PC-9 (cell line): ENCODE measurements at regions of chr3 and their contacts with region 1.

Region 1: GRCh38 chr3:192892981-192893700 is 24.5 kb downstream of the MB21D2 start:
- DNase-seq: peak; percentile 89 to 99
- H3K4me3 ChIP-seq: peak overlapping the region; percentile 44; the same call in 1 of the 2 replicates
- H3K27ac ChIP-seq: peak overlapping the region; percentile 88
- H3K4me1 ChIP-seq: peaks cover 96% of the 10 kb centered on the region
- H3K27me3 ChIP-seq: no peaks in the 10 kb centered on the region
- CTCF ChIP-seq: no peak

Region 2: DNA sequence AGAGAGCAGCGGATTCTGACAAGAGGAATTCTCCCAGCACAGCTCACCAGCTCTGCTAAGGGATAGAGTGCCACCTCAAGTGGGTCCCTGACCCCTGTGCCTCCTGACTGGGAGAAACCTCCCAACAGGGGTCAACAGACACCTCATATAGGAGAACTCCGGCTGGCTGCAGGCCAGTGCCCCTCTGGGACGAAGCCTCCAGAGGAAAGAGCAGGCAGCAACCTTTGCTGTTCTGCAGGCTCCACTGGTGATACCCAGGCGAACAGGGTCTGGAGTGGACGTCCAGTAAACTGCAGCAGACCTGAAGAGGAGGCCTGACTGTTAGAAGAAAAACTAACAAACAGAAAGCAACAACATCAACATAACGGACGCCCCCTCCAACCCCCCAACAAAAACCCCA is 134.5 kb before region 1 on chr3:
- CTCF ChIA-PET with region 1: no interaction called
- POLR2A ChIA-PET with region 1: no interaction called
- intact Hi-C with region 1: no loop called
- DNase-seq: peak in 1 of 2 experiments; percentile 8
- H3K4me3 ChIP-seq: no peak overlapping the region
- H3K27ac ChIP-seq: no peak overlapping the region
- H3K4me1 ChIP-seq: no peaks in the 10 kb centered on the region
- H3K27me3 ChIP-seq: no peaks in the 10 kb centered on the region
- CTCF ChIP-seq: no peak

Region 3: GRCh38 chr3:192879336-192880106 is 13.6 kb before region 1 on chr3:
- CTCF ChIA-PET with region 1: interaction called, 3 read pairs
- POLR2A ChIA-PET with region 1: interaction called, 11 read pairs
- intact Hi-C with region 1: loop called (anchors 2 kb)
- DNase-seq: peak; percentile 92 to 100
- H3K4me3 ChIP-seq: peak overlapping the region; percentile 37; the same call in 1 of the 2 replicates
- H3K27ac ChIP-seq: no peak overlapping the region
- H3K4me1 ChIP-seq: peaks cover 42% of the 10 kb centered on the region
- H3K27me3 ChIP-seq: no peaks in the 10 kb centered on the region
- CTCF ChIP-seq: no peak